CD4-positive, alpha-beta T cell (primary cell): ENCODE measurements at regions of chr11 and their contacts with region 1.

Region 1: GRCh38 chr11:59283825-59284772 is 71.4 kb upstream of the MPEG1 start:
- DNase-seq: peak in 12 of 14 experiments; percentile 10 to 81 (median 38)
- ATAC-seq: peak; percentile 92
- H3K4me3 ChIP-seq: peak overlapping the region; percentile 4
- H3K4me3 Mint-ChIP-seq: peak overlapping the region; percentile 77
- H3K27ac ChIP-seq: no peak overlapping the region
- H3K27ac Mint-ChIP-seq: peak overlapping the region; percentile 6
- H3K4me1 ChIP-seq: peaks cover 15% of the 10 kb centered on the region
- H3K4me1 Mint-ChIP-seq: peaks cover 18% of the 10 kb centered on the region
- H3K27me3 ChIP-seq: no peaks in the 10 kb centered on the region
- H3K27me3 Mint-ChIP-seq: peaks cover 5% of the 10 kb centered on the region
- CTCF ChIP-seq: peak; percentile 82

Region 2: GRCh38 chr11:59097113-59097708 is 186.9 kb before region 1 on chr11:
- CTCF ChIA-PET with region 1: no interaction called
- POLR2A ChIA-PET with region 1: no interaction called
- intact Hi-C with region 1: loop called in 1 of 2 experiments (anchors 10 kb)
- DNase-seq: peak; percentile 51 to 84 (median 60)
- ATAC-seq: peak; percentile 79
- H3K4me3 ChIP-seq: no peak overlapping the region
- H3K4me3 Mint-ChIP-seq: no peak overlapping the region
- H3K27ac ChIP-seq: no peak overlapping the region
- H3K27ac Mint-ChIP-seq: no peak overlapping the region
- H3K4me1 ChIP-seq: peaks cover 8% of the 10 kb centered on the region
- H3K4me1 Mint-ChIP-seq: peaks cover 8% of the 10 kb centered on the region
- H3K27me3 ChIP-seq: peaks cover 0 to 12% of the 10 kb centered on the region in 2 experiments
- H3K27me3 Mint-ChIP-seq: peaks cover 43% of the 10 kb centered on the region
- CTCF ChIP-seq: peak; percentile 76